MCF 10A (cell line): ENCODE measurements at regions of chr3 and their contacts with region 1.

Region 1: GRCh38 chr3:129439817-129440617 is at the starts of genes IFT122 and MBD4:
- DNase-seq: peak; percentile 99
- H3K4me3 Mint-ChIP-seq: peak within 1 kb of the TSS; percentile 83
- H3K27ac Mint-ChIP-seq: peak within 1 kb of the TSS; percentile 96
- H3K4me1 Mint-ChIP-seq: peaks cover 49% of the 10 kb centered on the region
- H3K27me3 Mint-ChIP-seq: no peaks in the 10 kb centered on the region
- CTCF ChIP-seq: no peak
- total RNA-seq, gene IFT122: 18.7 and 21.0 TPM in 2 replicates
- total RNA-seq, gene MBD4: 30.6 and 35.8 TPM in 2 replicates

Region 2: DNA sequence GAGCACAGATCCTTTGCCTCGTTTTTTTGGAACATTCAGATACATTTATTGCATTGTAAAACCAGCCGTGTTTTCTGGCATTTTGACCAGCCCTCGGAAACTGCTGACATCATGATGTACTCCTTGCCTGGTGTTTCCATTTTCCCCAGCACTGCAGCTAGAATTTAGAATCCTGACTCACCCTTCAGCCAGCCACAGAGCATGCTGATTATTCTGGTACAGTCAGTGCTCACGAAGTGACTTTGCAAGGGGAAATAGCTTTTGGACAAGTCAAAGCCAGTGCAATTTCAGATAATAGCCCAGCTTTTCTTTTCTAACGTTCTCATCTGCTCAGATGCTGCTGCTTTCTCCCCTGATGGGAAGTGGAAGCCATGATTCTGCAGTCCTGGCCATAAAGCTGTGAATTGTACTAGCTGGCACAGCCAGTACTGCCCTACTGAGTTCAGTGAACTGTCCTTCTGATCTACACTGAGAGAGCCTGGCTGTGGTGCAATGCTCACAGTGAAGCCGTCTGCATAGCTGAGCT is 244.2 kb before region 1 on chr3:
- CTCF ChIA-PET with region 1: no interaction called
- POLR2A ChIA-PET with region 1: interaction called, 10 read pairs
- intact Hi-C with region 1: no loop called
- DNase-seq: peak; percentile 83
- H3K4me3 Mint-ChIP-seq: peak overlapping the region; percentile 50
- H3K27ac Mint-ChIP-seq: peak overlapping the region; percentile 57
- H3K4me1 Mint-ChIP-seq: peaks cover 9% of the 10 kb centered on the region
- H3K27me3 Mint-ChIP-seq: no peaks in the 10 kb centered on the region
- CTCF ChIP-seq: no peak

Region 3: GRCh38 chr3:129316131-129317013 is 123.6 kb before region 1 on chr3:
- CTCF ChIA-PET with region 1: no interaction called
- POLR2A ChIA-PET with region 1: interaction called, 54 read pairs
- intact Hi-C with region 1: loop called (anchors 5 kb)
- DNase-seq: peak; percentile 82
- H3K4me3 Mint-ChIP-seq: peak overlapping the region; percentile 81
- H3K27ac Mint-ChIP-seq: peak overlapping the region; percentile 87
- H3K4me1 Mint-ChIP-seq: peaks cover 6% of the 10 kb centered on the region
- H3K27me3 Mint-ChIP-seq: no peaks in the 10 kb centered on the region
- CTCF ChIP-seq: peak; percentile 49

Region 4: GRCh38 chr3:129428376-129429079 is 11.5 kb before region 1 on chr3 and contains the start of gene EFCAB12:
- CTCF ChIA-PET with region 1: interaction called, 8 read pairs
- POLR2A ChIA-PET with region 1: interaction called, 55 read pairs
- intact Hi-C with region 1: no loop called
- DNase-seq: peak; percentile 78
- H3K4me3 Mint-ChIP-seq: peak within 1 kb of the TSS; percentile 67
- H3K27ac Mint-ChIP-seq: no peak within 1 kb of the TSS
- H3K4me1 Mint-ChIP-seq: peaks cover 14% of the 10 kb centered on the region
- H3K27me3 Mint-ChIP-seq: no peaks in the 10 kb centered on the region
- CTCF ChIP-seq: no peak
- total RNA-seq, gene EFCAB12: 0.22 TPM in 1 of 2 replicates, not detected in the other

Region 5: GRCh38 chr3:129481766-129482332 is 41.8 kb after region 1 on chr3:
- CTCF ChIA-PET with region 1: interaction called, 4 read pairs
- POLR2A ChIA-PET with region 1: interaction called, 75 read pairs
- intact Hi-C with region 1: loop called (anchors 2 kb)
- DNase-seq: peak; percentile 99
- H3K4me3 Mint-ChIP-seq: peak overlapping the region; percentile 8
- H3K27ac Mint-ChIP-seq: peak overlapping the region; percentile 74
- H3K4me1 Mint-ChIP-seq: peaks cover 55% of the 10 kb centered on the region
- H3K27me3 Mint-ChIP-seq: no peaks in the 10 kb centered on the region
- CTCF ChIP-seq: no peak

Region 6: GRCh38 chr3:130073582-130073981 is 633.6 kb after region 1 on chr3:
- CTCF ChIA-PET with region 1: no interaction called
- POLR2A ChIA-PET with region 1: no interaction called
- intact Hi-C with region 1: no loop called
- DNase-seq: no peak
- H3K4me3 Mint-ChIP-seq: no peak overlapping the region
- H3K27ac Mint-ChIP-seq: no peak overlapping the region
- H3K4me1 Mint-ChIP-seq: no peaks in the 10 kb centered on the region
- H3K27me3 Mint-ChIP-seq: no peaks in the 10 kb centered on the region
- CTCF ChIP-seq: no peak